ENCODE measurements at regions of chr1 and their contacts with region 1.

Region 1: GRCh38 chr1:27940297-27940696 is 5.5 kb downstream of the SMPDL3B start:
- DNase-seq: peak; percentile 71
- ATAC-seq: peak; percentile 78
- H3K4me3 ChIP-seq: no peak overlapping the region
- H3K4me3 Mint-ChIP-seq: no peak overlapping the region
- H3K27ac ChIP-seq: no peak overlapping the region
- H3K27ac Mint-ChIP-seq: no peak overlapping the region
- H3K4me1 ChIP-seq: peaks cover 4 to 8% of the 10 kb centered on the region in 2 donors
- H3K4me1 Mint-ChIP-seq: peaks cover 8% of the 10 kb centered on the region
- H3K27me3 ChIP-seq: peaks cover 0 to 12% (median 5%) of the 10 kb centered on the region in 4 experiments
- H3K27me3 Mint-ChIP-seq: peaks cover 8% of the 10 kb centered on the region
- CTCF ChIP-seq: peak; percentile 60

Region 2: GRCh38 chr1:27136998-27137542 is 803.2 kb before region 1 on chr1:
- CTCF ChIA-PET with region 1: no interaction called
- POLR2A ChIA-PET with region 1: no interaction called
- intact Hi-C with region 1: no loop called
- DNase-seq: peak; percentile 64
- ATAC-seq: peak; percentile 77
- H3K4me3 ChIP-seq: peak overlapping the region in 2 of 5 experiments; percentile 2 to 9
- H3K4me3 Mint-ChIP-seq: peak overlapping the region; percentile 76
- H3K27ac ChIP-seq: peak overlapping the region; percentile 56 to 75
- H3K27ac Mint-ChIP-seq: peak overlapping the region; percentile 97
- H3K4me1 ChIP-seq: peaks cover 29 to 45% of the 10 kb centered on the region in 2 donors
- H3K4me1 Mint-ChIP-seq: peaks cover 59% of the 10 kb centered on the region
- H3K27me3 ChIP-seq: no peaks in the 10 kb centered on the region
- H3K27me3 Mint-ChIP-seq: no peaks in the 10 kb centered on the region
- CTCF ChIP-seq: no peak

Region 3: DNA sequence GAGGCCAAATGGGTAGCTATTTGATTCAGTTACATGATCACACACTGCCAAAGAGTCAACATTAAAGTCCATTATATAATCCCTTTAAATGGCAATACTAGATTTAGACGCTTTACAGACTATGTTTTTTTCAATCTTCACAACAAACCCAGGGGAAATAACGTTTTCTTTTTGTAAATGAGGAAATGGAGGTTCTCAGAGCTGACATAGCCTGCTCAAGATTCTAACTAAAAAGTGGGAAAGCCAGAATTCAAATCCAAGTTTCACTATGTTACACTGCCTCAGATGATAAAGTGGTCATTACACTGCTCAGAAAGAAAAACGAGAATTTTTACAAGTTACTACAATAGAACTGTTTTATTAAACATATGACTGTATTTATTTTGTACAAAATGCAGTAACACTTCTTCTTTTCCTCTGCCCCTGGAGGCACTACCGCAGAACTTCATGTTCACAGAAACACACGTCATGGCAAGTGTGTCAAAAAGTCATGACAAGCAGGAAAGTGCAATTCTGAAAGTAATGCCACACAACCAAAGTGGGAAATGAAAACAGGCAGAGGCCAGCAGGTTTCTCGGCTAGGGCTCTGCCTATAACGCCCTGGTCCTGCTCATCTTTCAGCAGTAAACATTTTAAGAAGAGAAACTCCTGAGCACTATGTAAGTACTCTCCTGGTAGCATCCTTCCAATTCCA is 49.0 kb before region 1 on chr1:
- CTCF ChIA-PET with region 1: interaction called, 12 read pairs
- POLR2A ChIA-PET with region 1: interaction called, 3 read pairs
- intact Hi-C with region 1: no loop called
- DNase-seq: peak; percentile 88
- ATAC-seq: peak; percentile 81
- H3K4me3 ChIP-seq: peak overlapping the region in 2 of 5 experiments; percentile 7 to 12
- H3K4me3 Mint-ChIP-seq: peak overlapping the region; percentile 82
- H3K27ac ChIP-seq: peak overlapping the region; percentile 92 to 94
- H3K27ac Mint-ChIP-seq: peak overlapping the region; percentile 96
- H3K4me1 ChIP-seq: peaks cover 40 to 64% of the 10 kb centered on the region in 2 donors
- H3K4me1 Mint-ChIP-seq: peaks cover 57% of the 10 kb centered on the region
- H3K27me3 ChIP-seq: no peaks in the 10 kb centered on the region
- H3K27me3 Mint-ChIP-seq: no peaks in the 10 kb centered on the region
- CTCF ChIP-seq: peak; percentile 68

Region 4: GRCh38 chr1:28259307-28260167 is 319.2 kb after region 1 on chr1 and contains the start of gene SESN2:
- CTCF ChIA-PET with region 1: no interaction called
- POLR2A ChIA-PET with region 1: no interaction called
- intact Hi-C with region 1: no loop called
- DNase-seq: peak; percentile 98
- ATAC-seq: peak; percentile 99
- H3K4me3 ChIP-seq: peak within 1 kb of the TSS; percentile 65 to 96 (median 92)
- H3K4me3 Mint-ChIP-seq: peak within 1 kb of the TSS; percentile 84
- H3K27ac ChIP-seq: peak within 1 kb of the TSS in 1 of 2 donors; percentile 64
- H3K27ac Mint-ChIP-seq: peak within 1 kb of the TSS; percentile 75
- H3K4me1 ChIP-seq: peaks cover 22% of the 10 kb centered on the region in 2 donors
- H3K4me1 Mint-ChIP-seq: peaks cover 19% of the 10 kb centered on the region
- H3K27me3 ChIP-seq: peaks cover 0 to 4% (median 1%) of the 10 kb centered on the region in 4 experiments
- H3K27me3 Mint-ChIP-seq: peaks cover 16% of the 10 kb centered on the region
- CTCF ChIP-seq: no peak
- total RNA-seq, gene SESN2: 4.5 and 4.8 TPM in 2 replicates